HEK293 (cell line): ENCODE measurements at regions of chr6 and their contacts with region 1.

Region 1: DNA sequence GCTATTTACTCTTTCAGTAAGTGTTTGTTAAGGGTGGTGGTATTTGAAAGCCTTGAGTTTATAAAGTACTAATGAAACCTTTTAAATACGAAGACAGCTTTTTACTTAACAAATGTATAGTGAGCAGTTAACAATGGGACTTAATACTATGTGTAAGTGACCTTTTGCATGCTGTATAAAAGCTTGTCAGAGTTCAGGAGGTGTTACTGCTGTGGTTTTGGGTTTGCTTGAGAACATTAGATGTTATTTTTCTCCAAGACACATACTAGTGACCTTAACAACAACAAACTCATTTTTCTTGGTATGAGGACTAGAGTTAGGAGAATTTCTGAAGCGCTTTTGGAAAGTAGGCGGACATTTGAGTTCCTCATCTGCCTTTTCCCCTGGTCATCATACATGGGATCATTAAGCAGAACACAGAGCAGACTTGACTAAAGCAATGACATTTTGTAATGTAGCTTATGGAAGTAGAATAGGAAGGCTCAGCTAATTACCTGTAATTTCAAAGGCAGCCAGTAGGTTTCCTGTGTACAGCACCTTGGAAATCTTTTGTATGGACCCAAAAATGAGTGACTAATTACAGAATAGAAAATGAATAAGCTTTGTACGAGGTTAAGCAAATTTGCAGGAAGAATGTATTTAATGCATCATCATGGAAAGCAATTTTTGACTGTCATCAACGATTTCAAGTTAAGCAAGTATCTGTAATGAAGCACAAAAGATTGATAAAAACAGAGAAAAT is 14.1 kb downstream of the CDYL start:
- H3K4me3 ChIP-seq: no peak overlapping the region
- H3K27ac ChIP-seq: no peak overlapping the region
- H3K4me1 ChIP-seq: peaks cover 13% of the 10 kb centered on the region; the same call in 1 of the 2 replicates
- CTCF ChIP-seq: no peak

Region 2: GRCh38 chr6:4775584-4776494 is 14.5 kb before region 1 on chr6 and contains the start of gene CDYL:
- CTCF ChIA-PET with region 1: interaction called, 4 read pairs
- POLR2A ChIA-PET with region 1: interaction called, 17 read pairs
- H3K4me3 ChIP-seq: peak within 1 kb of the TSS; percentile 55
- H3K27ac ChIP-seq: peak within 1 kb of the TSS; percentile 76; the same call in 1 of the 2 replicates
- H3K4me1 ChIP-seq: peaks cover 5% of the 10 kb centered on the region
- CTCF ChIP-seq: no peak

Region 3: DNA sequence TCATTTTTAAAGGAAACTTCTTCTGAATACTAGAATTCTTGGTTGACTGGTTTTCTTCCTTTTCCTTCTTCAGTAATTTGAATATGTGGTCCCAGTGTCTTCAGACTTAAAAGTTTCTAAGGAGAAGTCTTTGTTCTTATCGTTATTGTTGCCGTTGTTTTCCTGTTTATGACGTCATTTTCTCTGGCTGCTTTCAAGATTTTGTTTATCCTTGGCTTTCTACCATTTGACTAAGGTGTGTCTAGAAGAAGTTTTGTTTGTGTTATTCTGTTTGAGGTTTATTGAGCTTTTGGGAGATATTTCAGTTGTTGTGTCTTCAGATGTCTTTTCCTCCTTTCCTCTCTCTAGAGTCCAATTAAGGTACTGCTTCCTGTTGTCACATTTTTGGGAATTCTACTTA is 10.3 kb after region 1 on chr6:
- CTCF ChIA-PET with region 1: interaction called, 10 read pairs
- POLR2A ChIA-PET with region 1: no interaction called
- H3K4me3 ChIP-seq: no peak overlapping the region
- H3K27ac ChIP-seq: no peak overlapping the region
- H3K4me1 ChIP-seq: peaks cover 3% of the 10 kb centered on the region; the same call in 1 of the 2 replicates
- CTCF ChIP-seq: no peak

Region 4: GRCh38 chr6:4805553-4806336 is 15.4 kb after region 1 on chr6:
- CTCF ChIA-PET with region 1: interaction called, 10 read pairs
- POLR2A ChIA-PET with region 1: no interaction called
- H3K4me3 ChIP-seq: no peak overlapping the region
- H3K27ac ChIP-seq: no peak overlapping the region
- H3K4me1 ChIP-seq: peaks cover 11% of the 10 kb centered on the region
- CTCF ChIP-seq: peak; percentile 72